ENCODE measurements at regions of chr22 and their contacts with region 1.

Region 1: GRCh38 chr22:33000342-33001280 is 57.6 kb downstream of the SYN3 start:
- DNase-seq: no peak
- H3K4me3 Mint-ChIP-seq: no peak overlapping the region
- H3K27ac Mint-ChIP-seq: no peak overlapping the region
- H3K4me1 Mint-ChIP-seq: no peaks in the 10 kb centered on the region
- H3K27me3 Mint-ChIP-seq: no peaks in the 10 kb centered on the region

Region 2: DNA sequence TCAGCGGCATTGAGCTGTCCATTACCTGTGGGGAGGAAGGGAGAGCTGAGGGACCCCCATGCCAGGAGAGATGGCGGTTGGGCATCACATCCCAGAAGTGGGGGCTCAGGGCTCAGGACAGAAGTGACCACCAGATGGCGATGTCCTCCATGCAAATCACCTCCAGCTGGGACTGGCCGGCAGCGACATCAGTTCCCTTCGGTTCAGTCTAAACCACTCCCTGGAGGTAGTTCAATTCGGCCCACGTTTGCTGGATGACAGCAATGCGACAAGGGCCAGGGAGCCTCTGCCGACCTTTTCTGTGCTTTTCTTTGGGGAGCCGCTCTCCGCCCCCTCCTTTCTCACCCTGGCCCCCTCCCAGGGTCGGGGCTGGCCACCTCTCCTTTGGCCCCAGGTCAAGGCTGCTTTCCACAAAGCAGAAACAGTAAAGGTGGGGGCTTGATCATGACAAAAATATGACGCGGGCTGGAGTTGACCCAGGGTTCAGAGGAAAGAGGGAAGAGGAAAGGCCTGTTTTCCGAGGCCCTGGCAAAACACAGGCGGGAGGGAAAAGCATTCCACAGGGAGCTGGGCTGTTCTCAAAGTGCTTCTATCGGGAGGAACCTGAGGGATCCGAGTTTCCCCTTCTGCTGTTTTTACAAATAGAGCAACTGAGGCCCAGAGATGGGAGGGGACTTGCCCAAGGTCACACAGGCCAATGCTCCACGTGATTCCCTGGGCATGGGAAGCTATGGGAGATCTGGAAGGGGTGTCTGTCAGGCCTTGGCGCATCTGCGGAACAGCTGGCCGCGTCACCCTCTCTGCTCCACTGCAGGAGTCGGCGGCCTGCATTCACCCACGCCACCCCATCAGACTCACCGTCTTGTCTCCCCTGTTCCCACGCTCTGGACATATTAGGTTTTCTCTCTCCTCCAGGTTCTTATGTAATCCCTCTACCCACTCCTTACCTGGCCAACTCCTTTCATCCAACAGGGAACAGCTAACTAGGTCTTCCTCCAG is 471.3 kb before region 1 on chr22:
- intact Hi-C with region 1: loop called (anchors 5 kb)
- DNase-seq: peak; percentile 24
- H3K4me3 Mint-ChIP-seq: no peak overlapping the region
- H3K27ac Mint-ChIP-seq: no peak overlapping the region
- H3K4me1 Mint-ChIP-seq: no peaks in the 10 kb centered on the region
- H3K27me3 Mint-ChIP-seq: no peaks in the 10 kb centered on the region

Region 3: DNA sequence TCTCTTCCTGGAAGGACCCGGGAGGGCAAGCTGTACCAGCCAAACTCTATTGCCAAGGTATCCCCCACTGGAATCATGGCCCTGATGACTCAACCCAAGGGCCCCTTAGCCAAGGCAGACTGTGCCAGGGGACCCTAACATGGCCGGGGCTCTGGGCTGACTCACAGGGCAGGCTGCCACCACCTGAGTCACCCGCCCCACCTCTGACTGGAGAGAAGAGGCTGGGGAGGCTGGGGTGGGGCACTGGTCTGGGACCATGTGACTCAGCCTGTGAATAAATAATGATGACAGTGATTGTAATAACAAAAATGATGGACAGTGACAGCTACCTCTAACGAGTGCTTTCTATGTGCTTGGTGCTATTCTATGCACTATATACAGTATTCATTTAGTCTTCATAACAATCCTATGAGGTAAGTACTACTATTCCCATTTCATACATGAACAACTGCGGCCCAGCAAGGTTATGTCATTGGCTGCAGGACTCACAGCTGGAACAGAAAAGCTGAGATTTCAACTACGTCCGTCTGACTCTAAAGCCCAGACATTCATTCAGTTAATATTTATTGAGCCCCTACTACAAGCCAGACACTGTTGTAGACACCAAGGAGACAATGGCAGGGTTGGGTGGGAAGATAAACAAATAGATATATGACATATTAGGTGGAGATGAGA is 441.8 kb before region 1 on chr22:
- intact Hi-C with region 1: no loop called
- DNase-seq: no peak
- H3K4me3 Mint-ChIP-seq: no peak overlapping the region
- H3K27ac Mint-ChIP-seq: no peak overlapping the region
- H3K4me1 Mint-ChIP-seq: no peaks in the 10 kb centered on the region
- H3K27me3 Mint-ChIP-seq: peaks cover 8% of the 10 kb centered on the region

Region 4: DNA sequence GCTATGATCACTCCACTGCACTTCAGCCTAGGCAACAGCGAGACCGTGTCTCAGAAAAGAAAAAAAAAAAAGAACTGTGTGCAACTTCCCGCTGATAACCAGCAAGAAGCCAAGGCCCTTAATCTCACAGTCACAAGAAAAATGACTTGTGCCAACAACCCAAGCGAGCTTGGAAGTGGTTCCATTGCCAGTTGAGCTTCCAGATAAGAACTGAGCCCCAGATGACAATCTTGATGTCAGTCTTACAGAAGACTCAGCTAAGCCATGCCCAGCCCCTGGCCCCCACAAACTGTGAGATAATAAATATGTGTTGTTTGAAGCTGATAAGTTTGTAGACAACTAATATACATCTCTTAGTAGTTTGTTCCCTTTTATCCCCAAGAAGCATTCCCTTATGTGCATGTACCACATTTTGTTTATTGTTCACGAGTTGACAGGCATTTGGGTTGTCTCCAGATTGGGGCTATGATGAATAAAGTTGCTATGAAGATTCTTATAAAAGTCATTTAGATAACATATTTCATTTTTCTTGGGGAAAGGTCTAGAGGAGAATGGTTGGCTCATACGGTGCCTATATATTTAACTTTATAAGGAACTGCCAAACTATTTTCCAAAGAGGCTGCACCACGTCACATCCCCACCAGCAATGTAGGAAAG is 113.2 kb before region 1 on chr22:
- intact Hi-C with region 1: no loop called
- DNase-seq: no peak
- H3K4me3 Mint-ChIP-seq: no peak overlapping the region
- H3K27ac Mint-ChIP-seq: no peak overlapping the region
- H3K4me1 Mint-ChIP-seq: no peaks in the 10 kb centered on the region
- H3K27me3 Mint-ChIP-seq: peaks cover 3% of the 10 kb centered on the region

Region 5: DNA sequence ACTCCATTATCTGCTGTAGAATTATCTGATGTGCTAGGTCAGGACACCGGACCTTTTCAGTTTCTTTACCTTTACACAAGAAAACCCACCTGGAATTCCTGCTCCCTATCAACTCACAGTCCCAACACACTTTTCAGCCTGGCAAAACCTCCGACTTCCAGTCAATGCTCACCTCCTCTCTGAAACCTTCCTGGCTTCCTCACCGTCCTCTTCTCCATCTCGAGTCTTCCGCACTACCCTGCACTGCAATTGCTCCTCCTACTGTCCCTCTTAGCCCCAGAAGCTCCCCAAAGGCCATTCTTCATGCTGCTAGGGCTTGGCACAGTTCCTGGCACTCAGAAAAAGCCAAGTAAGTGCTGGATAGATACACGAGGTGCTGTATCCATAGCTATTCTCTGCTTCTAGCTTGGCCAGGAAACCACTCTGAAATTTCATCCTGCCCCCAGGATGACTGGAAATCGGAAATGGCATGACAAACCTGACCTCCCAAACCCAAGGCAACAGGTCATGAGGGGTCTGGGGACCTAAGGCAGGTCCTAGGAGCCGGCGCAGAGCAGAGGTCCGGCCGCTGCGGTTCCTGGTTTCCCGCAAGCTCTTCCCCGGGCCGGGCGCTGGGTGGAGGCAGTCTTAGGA is 56.9 kb after region 1 on chr22:
- intact Hi-C with region 1: loop called (anchors 2 kb)
- DNase-seq: no peak
- H3K4me3 Mint-ChIP-seq: no peak overlapping the region
- H3K27ac Mint-ChIP-seq: no peak overlapping the region
- H3K4me1 Mint-ChIP-seq: no peaks in the 10 kb centered on the region
- H3K27me3 Mint-ChIP-seq: peaks cover 27% of the 10 kb centered on the region

Measured in activated T-helper 1 cell treated with anti-CD3 and anti-CD28 coated beads, Interleukin-12 subunit alpha, Interleukin-12 subunit beta, Interleukin-2, Interleukin-4 antibody, amounts not matched to agents 30 ng/mL and 10 ng/mL and 1 ng/mL, durations not matched to agents 14 hours and 24 hours and 36 hours (primary cell).